ENCODE measurements at regions of chr2 and their contacts with region 1.

Region 1: GRCh38 chr2:38565333-38565732 is 37.4 kb downstream of the HNRNPLL start:
- DNase-seq: no peak
- H3K4me3 ChIP-seq: no peak overlapping the region
- H3K27ac ChIP-seq: no peak overlapping the region
- H3K4me1 ChIP-seq: no peaks in the 10 kb centered on the region
- H3K27me3 ChIP-seq: no peaks in the 10 kb centered on the region
- CTCF ChIP-seq: no peak

Region 2: DNA sequence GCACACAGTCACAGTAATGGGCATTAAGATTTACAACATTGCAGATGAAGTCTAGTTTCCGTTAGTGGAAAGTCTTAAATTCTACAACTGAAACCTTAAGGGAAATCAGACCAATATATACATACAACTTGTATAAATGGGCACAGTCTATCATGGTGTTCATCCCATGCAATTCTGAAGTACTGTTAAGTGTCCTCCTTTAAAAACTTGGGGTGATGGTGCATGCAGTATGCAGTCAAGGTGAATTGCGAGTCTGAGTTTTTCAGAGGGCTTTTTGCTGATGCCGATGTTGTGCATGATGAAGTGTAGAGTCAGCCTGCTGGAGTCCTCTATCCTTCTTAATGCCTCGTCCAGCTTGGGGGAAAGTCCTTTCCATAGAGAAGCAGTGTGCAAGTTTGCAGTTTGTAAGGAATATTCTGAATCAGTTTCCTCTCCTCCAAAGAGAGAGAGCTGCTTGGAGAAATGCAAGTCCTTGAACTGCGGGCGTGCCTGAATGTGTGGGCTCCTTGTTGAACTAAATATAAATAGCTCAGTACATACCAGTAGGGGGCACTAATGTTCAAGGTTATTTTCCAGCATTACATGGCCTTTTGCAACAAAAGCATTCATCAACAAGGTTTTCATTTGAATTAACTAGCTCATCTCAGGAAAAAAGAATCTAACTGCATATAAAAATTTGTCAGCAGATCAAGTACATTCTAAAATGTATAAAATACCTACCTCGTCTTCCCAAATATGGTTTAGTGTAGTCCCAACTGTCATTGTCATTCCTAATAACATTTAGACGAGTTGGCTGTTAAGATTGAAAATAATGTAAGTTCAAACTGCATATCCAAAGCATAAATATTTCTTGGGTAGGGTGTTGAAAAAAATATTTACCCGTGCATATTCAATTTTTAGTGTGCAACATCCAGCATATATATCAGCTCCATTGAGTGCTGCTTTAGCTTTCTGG is 16.1 kb after region 1 on chr2:
- CTCF ChIA-PET with region 1: interaction called, 15 read pairs
- dilution Hi-C with region 1: no loop called
- in situ Hi-C with region 1: no loop called
- intact Hi-C with region 1: no loop called
- DNase-seq: peak; percentile 61
- H3K4me3 ChIP-seq: no peak overlapping the region
- H3K27ac ChIP-seq: no peak overlapping the region
- H3K4me1 ChIP-seq: no peaks in the 10 kb centered on the region
- H3K27me3 ChIP-seq: no peaks in the 10 kb centered on the region
- CTCF ChIP-seq: peak; percentile 53 to 62

Region 3: DNA sequence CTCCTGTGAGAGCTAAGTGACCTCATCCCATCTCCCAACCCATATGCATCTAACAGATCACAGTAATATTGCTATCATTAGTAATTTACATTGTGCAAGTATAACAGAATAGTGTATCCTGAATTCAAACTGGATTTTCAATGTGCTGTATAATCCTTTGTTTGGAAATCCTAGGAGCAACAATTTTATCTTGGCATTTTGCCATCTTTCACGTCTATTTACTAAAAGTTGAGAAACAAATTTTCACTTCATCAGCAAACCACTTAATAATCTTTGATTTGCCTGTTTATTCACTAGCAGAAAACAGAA is 33.6 kb after region 1 on chr2:
- CTCF ChIA-PET with region 1: no interaction called
- dilution Hi-C with region 1: no loop called
- in situ Hi-C with region 1: no loop called
- intact Hi-C with region 1: no loop called
- DNase-seq: no peak
- H3K4me3 ChIP-seq: no peak overlapping the region
- H3K27ac ChIP-seq: no peak overlapping the region
- H3K4me1 ChIP-seq: peaks cover 23% of the 10 kb centered on the region
- H3K27me3 ChIP-seq: no peaks in the 10 kb centered on the region
- CTCF ChIP-seq: no peak

Region 4: GRCh38 chr2:38665854-38666555 is 100.7 kb after region 1 on chr2 and contains the start of gene GALM:
- CTCF ChIA-PET with region 1: no interaction called
- dilution Hi-C with region 1: no loop called
- in situ Hi-C with region 1: no loop called
- intact Hi-C with region 1: no loop called
- DNase-seq: peak; percentile 12
- H3K4me3 ChIP-seq: no peak within 1 kb of the TSS
- H3K27ac ChIP-seq: no peak within 1 kb of the TSS
- H3K4me1 ChIP-seq: no peaks in the 10 kb centered on the region
- H3K27me3 ChIP-seq: no peaks in the 10 kb centered on the region
- CTCF ChIP-seq: no peak
- total RNA-seq, gene GALM: 0.50 TPM in 1 of 2 donors, not detected in the other

Measured in mammary epithelial cell (primary cell).